ENCODE measurements at regions of chr19 and their contacts with region 1.

Region 1: DNA sequence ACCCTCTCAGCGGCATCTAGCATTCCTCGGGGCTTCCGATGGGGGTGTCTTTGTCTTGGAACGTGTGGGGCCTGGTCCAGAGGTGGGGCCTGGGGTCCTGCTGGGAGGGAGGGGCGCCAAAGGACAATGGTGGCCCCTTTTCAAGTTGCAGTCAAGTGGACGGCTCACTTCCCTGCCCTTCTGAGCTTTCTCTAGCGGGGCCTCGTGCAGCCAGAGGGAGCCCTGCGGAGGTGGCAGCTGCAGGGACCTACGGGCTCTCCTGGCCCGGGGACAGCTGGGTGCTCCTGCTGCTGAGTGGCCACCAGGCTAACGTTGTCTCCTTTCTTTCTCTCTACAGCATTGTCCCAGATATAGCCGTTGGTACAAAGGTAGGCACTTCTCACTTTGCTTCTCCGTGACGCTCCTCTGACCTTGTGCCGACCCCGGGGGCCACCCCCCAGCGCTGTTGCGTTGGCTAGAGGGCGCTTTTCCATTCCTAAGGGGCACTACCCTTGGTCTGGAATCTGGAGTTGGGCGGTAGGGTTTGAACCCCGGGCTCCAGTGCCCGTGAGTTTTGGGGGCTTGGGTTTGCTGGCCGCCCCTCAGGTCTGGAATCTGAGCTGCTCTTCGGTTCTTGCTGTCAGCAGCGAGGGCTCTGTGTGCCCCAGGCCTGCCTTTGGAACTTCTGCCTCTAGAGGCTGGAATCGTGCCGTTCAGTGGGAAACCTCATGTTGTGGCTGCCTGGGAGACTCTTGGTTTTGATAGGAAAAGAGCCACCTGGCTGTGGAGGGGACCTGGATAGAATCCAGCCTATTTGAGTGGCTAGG is 2.0 kb downstream of the PTBP1 start:
- DNase-seq: no peak
- H3K4me3 ChIP-seq: peak overlapping the region; percentile 97
- H3K4me3 Mint-ChIP-seq: peak overlapping the region; percentile 90
- H3K27ac Mint-ChIP-seq: peak overlapping the region; percentile 93
- H3K4me1 ChIP-seq: peaks cover 32% of the 10 kb centered on the region
- H3K4me1 Mint-ChIP-seq: peaks cover 17% of the 10 kb centered on the region
- H3K27me3 ChIP-seq: no peaks in the 10 kb centered on the region
- H3K27me3 Mint-ChIP-seq: no peaks in the 10 kb centered on the region
- CTCF ChIP-seq: no peak

Region 2: GRCh38 chr19:888581-889385 is 89.5 kb after region 1 on chr19:
- CTCF ChIA-PET with region 1: interaction called, 14 read pairs
- POLR2A ChIA-PET with region 1: no interaction called
- intact Hi-C with region 1: no loop called
- DNase-seq: no peak
- H3K4me3 ChIP-seq: no peak overlapping the region
- H3K4me3 Mint-ChIP-seq: no peak overlapping the region
- H3K27ac Mint-ChIP-seq: no peak overlapping the region
- H3K4me1 ChIP-seq: peaks cover 11% of the 10 kb centered on the region
- H3K4me1 Mint-ChIP-seq: no peaks in the 10 kb centered on the region
- H3K27me3 ChIP-seq: no peaks in the 10 kb centered on the region
- H3K27me3 Mint-ChIP-seq: no peaks in the 10 kb centered on the region
- CTCF ChIP-seq: no peak

Measured in Caco-2 (cell line).